ENCODE measurements at regions of chr13 and their contacts with region 1.

Region 1: GRCh38 chr13:29892151-29892550 is 41.7 kb upstream of the UBL3 start:
- DNase-seq: no peak
- H3K4me3 ChIP-seq: no peak overlapping the region
- H3K27ac ChIP-seq: no peak overlapping the region
- H3K4me1 ChIP-seq: no peaks in the 10 kb centered on the region
- H3K27me3 ChIP-seq: peaks cover 3% of the 10 kb centered on the region
- CTCF ChIP-seq: no peak

Region 2: GRCh38 chr13:29877456-29878078 is 14.6 kb before region 1 on chr13:
- CTCF ChIA-PET with region 1: no interaction called
- dilution Hi-C with region 1: no loop called
- in situ Hi-C with region 1: no loop called
- intact Hi-C with region 1: no loop called
- DNase-seq: no peak
- H3K4me3 ChIP-seq: no peak overlapping the region
- H3K27ac ChIP-seq: no peak overlapping the region
- H3K4me1 ChIP-seq: peaks cover 8% of the 10 kb centered on the region
- H3K27me3 ChIP-seq: no peaks in the 10 kb centered on the region
- CTCF ChIP-seq: no peak

Region 3: GRCh38 chr13:29948244-29948643 is 56.1 kb after region 1 on chr13:
- CTCF ChIA-PET with region 1: no interaction called
- dilution Hi-C with region 1: no loop called
- in situ Hi-C with region 1: no loop called
- intact Hi-C with region 1: no loop called
- DNase-seq: no peak
- H3K4me3 ChIP-seq: no peak overlapping the region
- H3K27ac ChIP-seq: no peak overlapping the region
- H3K4me1 ChIP-seq: no peaks in the 10 kb centered on the region
- H3K27me3 ChIP-seq: no peaks in the 10 kb centered on the region
- CTCF ChIP-seq: no peak

Region 4: DNA sequence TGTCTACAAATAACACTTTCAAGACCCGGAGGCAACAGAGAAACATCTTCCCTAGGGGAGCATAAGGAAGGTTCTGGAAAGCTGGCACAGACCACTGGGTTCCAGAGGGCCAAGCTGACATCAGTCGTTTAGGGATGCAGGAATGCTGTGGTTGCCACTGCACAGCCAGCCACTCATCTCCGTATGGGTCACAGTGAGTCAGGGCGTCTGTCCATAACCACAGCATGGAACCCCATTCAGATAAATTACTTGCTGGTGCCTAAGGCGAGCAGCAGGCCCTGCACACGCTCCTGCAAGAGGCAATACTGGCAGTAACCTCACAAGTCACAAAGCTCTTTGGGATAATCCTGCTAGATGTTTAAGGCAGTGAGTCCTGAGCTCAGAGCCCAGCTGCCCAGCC is 99.2 kb after region 1 on chr13:
- CTCF ChIA-PET with region 1: no interaction called
- dilution Hi-C with region 1: loop called (anchors 5 kb)
- in situ Hi-C with region 1: no loop called
- intact Hi-C with region 1: no loop called
- DNase-seq: peak; percentile 90
- H3K4me3 ChIP-seq: no peak overlapping the region
- H3K27ac ChIP-seq: no peak overlapping the region
- H3K4me1 ChIP-seq: no peaks in the 10 kb centered on the region
- H3K27me3 ChIP-seq: no peaks in the 10 kb centered on the region
- CTCF ChIP-seq: no peak

Measured in mammary epithelial cell (primary cell).